Gastrocnemius medialis (tissue), 4 donors: ENCODE measurements at regions of chr14 and their contacts with region 1.

Region 1: DNA sequence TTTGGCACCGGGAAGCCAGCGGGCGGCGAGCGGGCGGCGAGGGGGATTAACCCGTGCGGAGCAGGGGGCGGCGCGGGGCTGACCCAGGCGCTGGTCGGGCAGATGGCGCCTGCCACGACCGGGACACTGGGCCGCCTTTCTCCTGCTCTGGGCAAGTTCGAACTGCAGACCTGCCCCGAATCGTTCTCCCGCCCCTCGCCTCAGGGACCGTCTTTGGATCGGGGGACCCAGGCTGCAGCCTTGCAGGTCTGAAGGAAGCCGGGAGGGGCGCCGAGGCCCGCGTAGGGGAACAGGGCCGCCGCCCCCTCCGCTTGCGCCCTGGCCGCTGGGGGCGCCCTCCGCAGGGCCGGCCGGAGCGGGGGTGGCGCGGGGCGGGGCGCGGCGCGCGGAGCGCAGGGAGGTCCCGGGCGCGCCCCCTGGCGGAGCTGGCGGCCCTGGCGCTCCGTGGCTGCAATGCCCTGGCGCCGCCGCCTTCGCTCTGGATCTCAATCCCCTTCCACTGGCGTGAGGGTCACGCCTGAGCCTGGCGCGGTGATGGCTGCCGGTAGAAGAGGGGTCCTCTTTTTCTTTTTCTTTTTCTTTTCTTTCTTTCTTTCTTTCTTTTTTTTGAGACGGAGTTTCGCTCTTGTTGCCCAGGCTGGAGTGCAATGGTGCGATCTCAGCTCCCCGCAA is 449 bp upstream of the LTBP2 start:
- DNase-seq: peak; percentile 25 to 65
- ATAC-seq: peak; percentile 78 to 84
- H3K4me3 ChIP-seq: peak overlapping the region; percentile 61 to 96 (median 70)
- H3K27ac ChIP-seq: peak overlapping the region; percentile 37 to 56 (median 50)
- H3K4me1 ChIP-seq: peaks cover 7 to 9% of the 10 kb centered on the region in 2 donors
- H3K27me3 ChIP-seq: peaks cover 16 to 37% (median 17%) of the 10 kb centered on the region in 3 donors
- CTCF ChIP-seq: peak; percentile 68 to 94 (median 83)
- POLR2A ChIP-seq: no peak

Region 2: GRCh38 chr14:74362361-74362915 is 250.0 kb before region 1 on chr14:
- in situ Hi-C with region 1: no loop called
- intact Hi-C with region 1: loop called (anchors 5 kb)
- DNase-seq: peak; percentile 56 to 69
- ATAC-seq: peak; percentile 83 to 94
- H3K4me3 ChIP-seq: no peak overlapping the region
- H3K27ac ChIP-seq: no peak overlapping the region
- H3K4me1 ChIP-seq: no peaks in the 10 kb centered on the region
- H3K27me3 ChIP-seq: no peaks in the 10 kb centered on the region
- CTCF ChIP-seq: peak; percentile 82 to 94 (median 88)
- POLR2A ChIP-seq: no peak

Region 3: GRCh38 chr14:74501135-74501614 is 111.3 kb before region 1 on chr14:
- in situ Hi-C with region 1: loop called in 1 of 4 experiments (anchors 10 kb)
- intact Hi-C with region 1: loop called (anchors 1 kb)
- DNase-seq: peak in 1 of 2 donors; percentile 48
- ATAC-seq: peak; percentile 38 to 43
- H3K4me3 ChIP-seq: no peak overlapping the region
- H3K27ac ChIP-seq: no peak overlapping the region
- H3K4me1 ChIP-seq: no peaks in the 10 kb centered on the region
- H3K27me3 ChIP-seq: no peaks in the 10 kb centered on the region
- CTCF ChIP-seq: peak in 4 of 5 experiments; percentile 20 to 47 (median 36)
- POLR2A ChIP-seq: no peak

Region 4: DNA sequence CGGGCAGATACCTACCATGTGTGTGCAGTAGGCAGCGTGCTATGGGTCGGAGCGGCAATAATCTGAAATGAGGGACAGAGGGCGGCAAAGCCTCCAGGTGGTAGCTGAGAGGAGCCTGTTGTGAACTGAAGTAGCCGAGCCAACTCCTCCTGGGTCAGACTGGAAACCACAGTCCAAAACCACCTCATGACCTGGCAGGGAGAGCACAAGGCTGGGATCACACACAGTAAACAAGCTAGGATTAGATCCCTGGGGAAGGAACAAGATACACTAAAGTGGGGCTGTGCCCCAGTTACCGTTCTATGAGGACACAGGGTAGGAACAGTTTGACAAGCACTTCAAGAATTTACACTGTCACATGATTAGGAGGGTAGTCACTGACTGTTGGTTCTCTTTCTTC is 51.4 kb after region 1 on chr14:
- in situ Hi-C with region 1: no loop called
- intact Hi-C with region 1: loop called (anchors 2 kb)
- DNase-seq: peak; percentile 96 to 98
- ATAC-seq: peak; percentile 97 to 98
- H3K4me3 ChIP-seq: no peak overlapping the region
- H3K27ac ChIP-seq: peak overlapping the region; percentile 80 to 88 (median 87)
- H3K4me1 ChIP-seq: peaks cover 34 to 58% of the 10 kb centered on the region in 2 donors
- H3K27me3 ChIP-seq: no peaks in the 10 kb centered on the region
- CTCF ChIP-seq: peak in 3 of 5 experiments; percentile 5 to 38 (median 37)
- POLR2A ChIP-seq: peak in 1 of 2 donors; percentile 17

Region 5: DNA sequence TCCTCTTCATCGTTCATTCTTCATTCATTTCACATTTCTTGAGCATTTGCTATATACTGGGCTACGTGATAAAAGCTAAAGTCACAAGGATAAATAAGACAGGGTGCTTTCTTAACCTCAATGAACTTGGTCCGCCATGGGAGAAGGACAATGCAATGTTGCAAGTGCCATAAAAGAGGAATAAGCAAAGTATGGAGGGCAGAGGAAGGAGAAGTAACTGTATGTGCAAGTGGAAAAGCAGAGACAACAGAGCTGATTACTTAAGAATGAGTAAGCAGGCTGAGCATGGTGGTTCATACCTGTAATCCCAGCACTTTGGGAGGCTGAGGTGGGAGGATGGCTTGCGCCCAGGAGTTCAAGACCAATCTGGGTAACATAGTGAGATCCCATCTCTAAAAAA is 86.0 kb after region 1 on chr14:
- in situ Hi-C with region 1: no loop called
- intact Hi-C with region 1: no loop called
- DNase-seq: no peak
- ATAC-seq: no peak
- H3K4me3 ChIP-seq: no peak overlapping the region
- H3K27ac ChIP-seq: no peak overlapping the region
- H3K4me1 ChIP-seq: peaks cover 9 to 10% of the 10 kb centered on the region in 2 donors
- H3K27me3 ChIP-seq: no peaks in the 10 kb centered on the region
- CTCF ChIP-seq: no peak
- POLR2A ChIP-seq: no peak

Region 6: GRCh38 chr14:74739293-74740030 is 127.0 kb after region 1 on chr14:
- in situ Hi-C with region 1: no loop called
- intact Hi-C with region 1: no loop called
- DNase-seq: no peak
- ATAC-seq: no peak
- H3K4me3 ChIP-seq: no peak overlapping the region
- H3K27ac ChIP-seq: no peak overlapping the region
- H3K4me1 ChIP-seq: no peaks in the 10 kb centered on the region
- H3K27me3 ChIP-seq: no peaks in the 10 kb centered on the region
- CTCF ChIP-seq: no peak
- POLR2A ChIP-seq: no peak

Region 7: GRCh38 chr14:74762917-74763802 is 150.7 kb after region 1 on chr14 and contains the start of gene YLPM1:
- in situ Hi-C with region 1: no loop called
- intact Hi-C with region 1: loop called (anchors 1 kb)
- DNase-seq: peak; percentile 89 to 92
- ATAC-seq: peak; percentile 100
- H3K4me3 ChIP-seq: peak within 1 kb of the TSS; percentile 78 to 99 (median 88)
- H3K27ac ChIP-seq: peak within 1 kb of the TSS; percentile 88 to 94 (median 90)
- H3K4me1 ChIP-seq: peaks cover 40 to 45% of the 10 kb centered on the region in 2 donors
- H3K27me3 ChIP-seq: no peaks in the 10 kb centered on the region
- CTCF ChIP-seq: peak in 3 of 5 experiments; percentile 28 to 44 (median 29)
- POLR2A ChIP-seq: peak; percentile 80 to 89
- total RNA-seq, gene YLPM1: 22.2 to 29.2 (median 25.8) TPM